ENCODE measurements at regions of chr5 and their contacts with region 1.

Region 1: DNA sequence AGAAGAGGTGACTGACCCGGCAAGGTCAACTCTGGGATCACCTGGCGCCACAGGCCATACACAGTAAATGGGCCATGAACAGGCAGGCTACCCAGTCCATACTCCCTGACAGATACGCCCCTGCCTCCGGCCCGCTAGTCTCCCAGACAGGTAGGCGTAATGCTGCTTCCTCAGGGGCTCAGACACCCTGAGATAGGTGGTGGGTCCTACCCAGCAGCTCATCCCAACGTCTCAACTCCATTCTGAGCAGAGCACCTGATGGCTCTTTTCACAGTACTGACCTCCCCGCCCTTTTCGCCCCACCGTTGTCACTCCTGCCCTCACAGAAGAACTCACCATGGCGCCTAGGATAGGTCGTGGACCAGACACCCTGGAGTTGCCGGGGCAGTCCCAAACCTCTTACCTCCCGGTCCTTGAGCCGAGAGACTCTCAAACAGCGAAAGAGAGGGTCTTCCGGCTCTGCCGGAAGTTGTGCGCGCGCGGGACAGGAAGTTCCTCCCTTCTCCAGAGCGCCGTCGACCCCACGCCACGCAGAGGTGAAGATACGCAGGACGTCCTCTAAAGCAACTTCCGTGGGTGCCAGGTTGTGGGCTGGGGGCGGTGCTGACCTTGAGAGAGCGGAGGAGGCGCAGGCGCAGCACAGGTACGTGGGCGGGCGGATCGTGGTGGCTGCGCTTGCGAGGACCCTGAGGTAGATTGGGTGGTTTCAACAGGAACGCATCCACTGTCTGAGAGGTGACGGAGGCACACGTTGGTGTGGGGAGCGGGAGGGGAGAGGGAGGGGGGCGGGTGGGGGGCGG is at the start of gene TMEM161B:
- DNase-seq: peak; percentile 94
- H3K4me3 Mint-ChIP-seq: peak within 1 kb of the TSS; percentile 93
- H3K27ac Mint-ChIP-seq: peak within 1 kb of the TSS; percentile 96
- H3K4me1 Mint-ChIP-seq: peaks cover 42% of the 10 kb centered on the region
- H3K27me3 Mint-ChIP-seq: no peaks in the 10 kb centered on the region
- total RNA-seq, gene TMEM161B: 18.0 to 18.1 TPM

Region 2: GRCh38 chr5:88203981-88204750 is 64.4 kb before region 1 on chr5:
- CTCF ChIA-PET with region 1: no interaction called
- intact Hi-C with region 1: no loop called
- DNase-seq: peak; percentile 14
- H3K4me3 Mint-ChIP-seq: no peak overlapping the region
- H3K27ac Mint-ChIP-seq: no peak overlapping the region
- H3K4me1 Mint-ChIP-seq: peaks cover 10% of the 10 kb centered on the region
- H3K27me3 Mint-ChIP-seq: no peaks in the 10 kb centered on the region

Region 3: DNA sequence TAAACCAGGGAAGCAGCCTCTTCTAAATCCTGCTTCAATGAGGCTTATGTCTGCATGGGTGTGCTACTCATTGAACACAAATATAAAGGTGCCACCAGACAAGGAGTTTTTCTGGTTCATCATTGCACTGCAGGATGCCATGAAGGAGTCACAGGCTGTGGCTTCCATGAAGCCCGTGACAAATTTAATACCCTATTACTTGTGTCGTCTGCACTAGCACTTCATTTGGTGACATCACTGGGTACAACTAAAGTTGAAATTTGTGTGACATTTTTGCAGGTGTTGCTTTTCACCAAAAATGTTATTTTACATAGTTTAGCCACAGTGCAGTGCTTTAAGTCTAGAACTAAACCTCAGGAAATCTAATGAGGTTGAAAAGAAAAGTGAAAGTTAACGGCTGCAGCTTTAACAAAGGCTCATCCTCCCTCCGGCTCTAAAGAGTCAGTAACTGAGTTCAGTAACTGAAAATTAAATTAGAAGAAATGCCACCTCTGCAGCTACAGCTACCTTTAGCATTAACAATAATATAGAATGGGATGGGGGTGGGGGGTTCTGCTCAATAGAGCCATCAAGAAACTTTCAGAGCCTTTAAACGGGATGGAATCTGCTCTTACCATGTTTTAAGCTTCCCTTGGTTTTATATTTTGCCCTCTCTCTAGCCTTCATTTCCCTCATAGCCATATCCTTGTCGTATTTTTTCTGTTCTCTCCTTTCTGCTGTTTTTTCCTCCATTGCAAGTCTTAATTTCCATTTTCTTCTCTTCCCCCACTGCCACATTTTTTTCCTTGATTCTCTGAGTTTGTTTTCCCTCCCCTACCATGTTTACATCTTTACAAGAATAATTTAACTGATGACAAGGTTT is 233.8 kb after region 1 on chr5:
- CTCF ChIA-PET with region 1: no interaction called
- intact Hi-C with region 1: loop called (anchors 1 kb)
- DNase-seq: peak; percentile 20
- H3K4me3 Mint-ChIP-seq: peak overlapping the region; percentile 78
- H3K27ac Mint-ChIP-seq: peak overlapping the region; percentile 77
- H3K4me1 Mint-ChIP-seq: peaks cover 3% of the 10 kb centered on the region
- H3K27me3 Mint-ChIP-seq: no peaks in the 10 kb centered on the region